Heart right ventricle (tissue), 16 donors: ENCODE measurements at regions of chr2 and their contacts with region 1.

Region 1: DNA sequence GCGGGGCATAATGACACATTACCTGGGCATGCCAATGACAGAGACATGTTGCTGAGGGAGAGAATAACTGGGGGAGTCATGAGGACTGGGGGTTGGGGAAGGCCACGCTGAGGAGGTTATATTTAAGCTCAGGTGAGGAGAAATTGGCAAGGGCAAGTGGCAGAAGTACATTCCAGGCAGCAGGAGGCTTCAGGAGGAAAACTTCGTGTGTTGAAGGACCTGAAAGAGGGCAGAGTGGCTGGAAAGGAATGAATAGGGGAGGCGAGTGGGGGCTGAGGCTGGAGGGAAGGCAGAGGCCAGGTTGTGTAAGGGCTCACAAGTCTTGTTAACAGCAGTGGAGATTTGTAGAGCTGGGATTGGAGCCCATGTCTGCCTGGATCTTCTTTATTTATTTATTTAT is 166.3 kb downstream of the RAPGEF4 start:
- DNase-seq: no peak
- ATAC-seq: no peak
- H3K4me3 ChIP-seq: no peak overlapping the region
- H3K27ac ChIP-seq: no peak overlapping the region
- H3K4me1 ChIP-seq: peaks cover 0 to 28% (median 15%) of the 10 kb centered on the region in 9 donors
- H3K27me3 ChIP-seq: no peaks in the 10 kb centered on the region
- CTCF ChIP-seq: no peak

Region 2: DNA sequence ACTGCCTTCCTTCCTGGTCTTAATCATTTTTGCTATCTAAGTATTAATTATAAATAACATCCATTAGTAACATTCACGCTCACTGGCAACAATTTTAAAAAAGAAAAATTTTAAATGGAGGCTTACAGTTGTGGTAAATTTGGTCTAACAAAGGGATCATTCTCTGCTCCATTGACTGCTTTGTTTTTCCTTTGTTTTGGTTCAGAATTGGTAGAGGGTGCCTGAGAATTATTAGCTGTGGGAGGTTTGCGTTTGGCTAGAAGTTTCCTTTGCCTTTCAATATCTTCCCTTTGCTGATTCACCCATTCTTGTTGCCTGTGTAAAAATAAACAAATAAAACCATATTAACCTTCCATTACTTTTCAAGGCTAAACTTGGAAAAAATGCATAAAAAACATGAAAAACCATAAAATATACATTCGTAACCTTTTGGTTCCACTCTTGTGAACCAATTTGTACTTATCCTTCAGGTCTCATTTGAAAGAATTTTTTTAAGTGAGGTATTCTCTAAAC is 1855.8 kb before region 1 on chr2:
- intact Hi-C with region 1: loop called in 1 of 10 experiments (anchors 5 kb)
- DNase-seq: no peak
- ATAC-seq: no peak
- H3K4me3 ChIP-seq: no peak overlapping the region
- H3K27ac ChIP-seq: no peak overlapping the region
- H3K4me1 ChIP-seq: no peaks in the 10 kb centered on the region
- H3K27me3 ChIP-seq: no peaks in the 10 kb centered on the region
- CTCF ChIP-seq: no peak

Region 3: DNA sequence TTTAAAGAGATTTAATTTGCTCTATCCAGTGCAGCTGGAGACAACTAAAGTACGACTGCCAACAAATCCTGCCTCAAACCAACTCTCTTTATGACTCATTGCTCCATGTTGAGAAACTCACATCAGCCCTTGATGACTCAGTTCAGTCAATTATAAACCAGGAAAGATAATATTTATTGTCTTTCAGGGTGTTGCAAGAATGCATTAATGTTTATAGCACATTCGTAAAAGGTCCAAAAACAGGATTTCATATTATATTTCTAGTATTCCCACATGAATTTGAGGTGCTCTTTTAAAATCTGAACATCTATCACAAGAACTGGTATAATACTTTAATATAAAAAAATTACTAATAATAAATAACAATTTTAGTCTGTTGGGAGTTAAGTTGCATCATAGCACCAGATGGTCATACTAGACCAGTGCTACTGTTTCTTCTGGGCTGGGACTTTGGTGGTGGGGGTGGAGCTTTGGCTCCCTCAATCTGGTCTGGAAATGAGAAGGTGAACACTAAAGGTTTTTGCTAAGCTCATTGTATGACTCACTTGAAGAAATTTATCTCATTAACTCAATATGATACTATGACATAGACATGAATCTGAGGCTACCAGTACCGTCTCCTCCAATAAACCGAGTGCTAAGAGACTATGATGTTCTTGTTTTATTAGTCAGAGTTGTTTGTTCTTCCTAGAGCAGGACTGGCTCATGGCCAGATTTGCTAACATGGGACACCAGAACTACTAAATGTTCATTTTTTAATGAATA is 147.2 kb after region 1 on chr2:
- intact Hi-C with region 1: no loop called
- DNase-seq: peak; percentile 45 to 57
- ATAC-seq: peak; percentile 83 to 94 (median 90)
- H3K4me3 ChIP-seq: no peak overlapping the region
- H3K27ac ChIP-seq: peak overlapping the region in 9 of 10 donors; percentile 28 to 69 (median 57)
- H3K4me1 ChIP-seq: peaks cover 0 to 30% (median 10%) of the 10 kb centered on the region in 9 donors
- H3K27me3 ChIP-seq: no peaks in the 10 kb centered on the region
- CTCF ChIP-seq: no peak